Psoas muscle (tissue), 8 donors: ENCODE measurements at regions of chr14 and their contacts with region 1.

Region 1: GRCh38 chr14:68377459-68377858 is 415.4 kb downstream of the ZFP36L1 start:
- DNase-seq: peak; percentile 41 to 60
- ATAC-seq: peak in 3 of 4 donors; percentile 22 to 48 (median 45)
- H3K4me3 ChIP-seq: no peak overlapping the region
- H3K27ac ChIP-seq: peak overlapping the region; percentile 27
- H3K4me1 ChIP-seq: peaks cover 27% of the 10 kb centered on the region
- H3K27me3 ChIP-seq: no peaks in the 10 kb centered on the region
- CTCF ChIP-seq: no peak

Region 2: DNA sequence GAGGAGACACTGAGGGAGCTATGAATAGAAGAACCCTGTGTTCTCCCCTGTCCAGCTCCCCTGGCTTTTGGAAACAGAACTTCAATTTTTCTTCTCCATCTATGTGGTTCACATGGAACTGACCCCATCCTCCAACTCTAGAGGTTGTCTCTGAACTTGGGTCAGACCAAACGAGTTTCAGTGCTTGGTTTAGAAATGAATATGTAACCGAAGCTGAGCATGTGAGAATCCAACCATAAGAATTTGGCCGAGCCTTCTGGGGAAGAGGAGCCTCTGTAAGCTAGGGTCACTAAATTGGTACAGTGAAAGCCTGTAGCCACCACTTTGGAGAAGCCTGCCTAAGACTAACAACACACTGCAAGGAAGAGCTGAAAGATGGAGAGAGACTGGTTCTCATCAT is 49.0 kb before region 1 on chr14:
- intact Hi-C with region 1: no loop called
- DNase-seq: no peak
- ATAC-seq: no peak
- H3K4me3 ChIP-seq: no peak overlapping the region
- H3K27ac ChIP-seq: no peak overlapping the region
- H3K4me1 ChIP-seq: no peaks in the 10 kb centered on the region
- H3K27me3 ChIP-seq: no peaks in the 10 kb centered on the region
- CTCF ChIP-seq: no peak

Region 3: DNA sequence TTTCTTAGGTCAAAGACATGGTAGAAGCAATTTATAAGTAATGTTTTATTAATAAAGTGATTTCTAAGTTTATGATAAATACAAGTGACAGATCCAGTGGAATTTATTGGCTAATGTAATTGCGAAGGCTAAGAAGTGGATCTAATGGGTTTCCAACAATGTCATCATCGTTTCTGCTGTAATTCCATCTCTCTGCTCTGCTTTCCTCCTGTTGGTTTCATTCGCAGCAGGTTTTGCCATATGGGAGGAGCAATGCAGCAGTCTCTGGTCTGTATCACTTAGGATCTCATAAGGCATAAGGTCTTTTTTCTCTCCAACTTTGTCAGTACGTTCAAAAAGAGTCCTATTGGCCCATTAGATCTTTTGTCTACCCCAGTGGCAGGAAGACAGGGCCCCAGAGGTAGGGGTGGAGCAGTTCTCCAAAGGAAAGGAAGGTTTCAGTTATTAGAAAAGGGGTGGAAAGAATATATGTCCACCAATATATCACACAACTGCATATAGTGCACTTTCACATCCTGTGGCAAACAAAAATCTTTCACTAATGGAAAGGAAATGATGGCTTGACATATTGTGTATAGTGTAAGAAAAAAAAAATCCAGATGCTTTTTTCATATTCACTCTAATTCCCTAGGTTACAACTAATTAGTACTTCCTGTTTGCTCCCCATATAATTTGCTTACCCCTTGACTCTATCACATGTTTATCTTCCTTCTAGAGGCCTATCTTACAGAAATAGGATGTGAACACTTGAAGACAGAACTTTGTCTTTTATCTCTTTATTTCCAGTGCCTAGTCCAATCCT is 35.8 kb before region 1 on chr14:
- intact Hi-C with region 1: no loop called
- DNase-seq: no peak
- ATAC-seq: no peak
- H3K4me3 ChIP-seq: no peak overlapping the region
- H3K27ac ChIP-seq: no peak overlapping the region
- H3K4me1 ChIP-seq: no peaks in the 10 kb centered on the region
- H3K27me3 ChIP-seq: no peaks in the 10 kb centered on the region
- CTCF ChIP-seq: no peak

Region 4: DNA sequence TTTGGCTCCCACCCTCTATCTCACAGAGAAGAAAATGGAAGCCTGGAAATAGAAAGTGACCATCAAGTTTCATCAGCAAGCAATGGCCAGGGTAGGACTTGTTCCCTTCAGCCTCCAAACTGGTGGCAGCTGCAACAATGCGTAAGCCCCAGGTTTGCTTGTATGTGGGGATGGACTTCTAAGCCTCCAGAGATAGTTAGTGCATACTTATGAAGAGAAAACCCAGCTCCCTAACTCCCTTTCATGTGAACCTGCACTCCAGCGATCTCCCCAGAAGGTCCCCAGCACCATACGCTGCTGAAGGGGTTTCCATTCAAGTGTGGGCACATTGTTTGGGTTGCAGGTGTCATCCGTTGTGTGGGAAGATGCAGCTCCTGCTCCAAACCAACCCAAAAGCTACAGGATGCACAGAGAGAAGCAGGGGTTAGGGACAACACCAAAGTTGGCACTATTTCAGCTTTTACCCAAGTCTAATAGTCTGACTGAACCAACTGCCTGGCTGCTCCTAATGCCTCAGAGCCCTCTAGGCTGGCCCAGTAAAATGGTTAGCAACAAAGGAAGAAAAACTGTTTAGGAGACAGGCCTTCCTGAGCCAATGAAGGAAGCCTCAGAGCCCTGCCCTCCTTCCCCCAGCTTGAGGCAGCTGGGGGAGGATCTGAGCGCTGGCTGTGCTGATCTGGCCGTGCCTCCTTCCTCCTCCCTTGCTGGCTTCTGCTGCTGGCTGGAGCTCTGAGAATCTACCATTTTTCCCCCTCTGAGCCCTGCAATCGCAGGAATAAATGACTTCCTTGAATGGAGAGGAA is 403.1 kb after region 1 on chr14:
- intact Hi-C with region 1: loop called in 1 of 2 experiments (anchors 5 kb)
- DNase-seq: peak; percentile 50 to 73
- ATAC-seq: peak; percentile 42 to 78 (median 73)
- H3K4me3 ChIP-seq: peak overlapping the region; percentile 29
- H3K27ac ChIP-seq: peak overlapping the region; percentile 88
- H3K4me1 ChIP-seq: peaks cover 34% of the 10 kb centered on the region
- H3K27me3 ChIP-seq: no peaks in the 10 kb centered on the region
- CTCF ChIP-seq: no peak